K562 (cell line): ENCODE measurements at regions of chr7 and their contacts with region 1.

Region 1: GRCh38 chr7:131040467-131040932 is 287.2 kb upstream of the MKLN1 start:
- DNase-seq: peak; percentile 72 to 81 (median 77)
- ATAC-seq: peak; percentile 95
- H3K4me3 ChIP-seq: no peak overlapping the region
- H3K27ac ChIP-seq: no peak overlapping the region
- H3K4me1 ChIP-seq: no peaks in the 10 kb centered on the region; a peak in 2 of 5 replicates
- H3K27me3 ChIP-seq: no peaks in the 10 kb centered on the region
- CTCF ChIP-seq: peak; percentile 91 to 98 (median 96)
- EP300 ChIP-seq: no peak
- POLR2A ChIP-seq: no peak
- RAD21 ChIP-seq: peak; percentile 90 to 95

Region 2: DNA sequence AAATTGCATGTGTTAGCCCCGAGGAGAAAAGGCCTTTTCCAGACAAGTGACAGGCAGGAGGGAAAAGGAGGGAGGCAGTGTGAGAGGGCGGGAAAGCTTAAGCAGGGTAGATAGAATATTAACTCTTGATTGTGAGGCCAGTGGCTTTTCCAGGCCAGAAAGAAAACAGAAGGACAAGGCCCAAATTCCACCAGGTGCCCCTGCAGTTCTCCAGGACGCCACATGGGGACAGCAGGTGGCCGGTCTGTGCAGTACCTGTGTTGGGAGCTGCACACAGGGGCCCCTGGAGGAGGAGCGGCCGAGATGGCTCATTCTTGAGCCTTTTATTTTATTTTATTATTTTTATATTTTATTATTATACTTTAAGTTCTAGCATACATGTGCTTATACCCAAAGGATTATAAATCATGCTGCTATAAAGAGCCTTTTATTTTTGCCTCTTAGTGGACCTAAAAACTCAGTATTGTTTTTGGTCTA is 165.2 kb before region 1 on chr7:
- CTCF ChIA-PET with region 1: interaction called, 23 read pairs
- POLR2A ChIA-PET with region 1: no interaction called
- in situ Hi-C with region 1: no loop called
- intact Hi-C with region 1: loop called (anchors 1 kb)
- DNase-seq: peak; percentile 79 to 93 (median 90)
- ATAC-seq: peak; percentile 100
- H3K4me3 ChIP-seq: no peak overlapping the region
- H3K27ac ChIP-seq: no peak overlapping the region
- H3K4me1 ChIP-seq: no peaks in the 10 kb centered on the region
- H3K27me3 ChIP-seq: no peaks in the 10 kb centered on the region
- CTCF ChIP-seq: peak; percentile 97 to 99 (median 99)
- EP300 ChIP-seq: no peak
- POLR2A ChIP-seq: no peak
- RAD21 ChIP-seq: peak; percentile 72 to 93

Region 3: GRCh38 chr7:130938661-130939060 is 101.8 kb before region 1 on chr7:
- CTCF ChIA-PET with region 1: no interaction called
- POLR2A ChIA-PET with region 1: no interaction called
- in situ Hi-C with region 1: no loop called
- intact Hi-C with region 1: no loop called
- DNase-seq: no peak
- ATAC-seq: no peak
- H3K4me3 ChIP-seq: no peak overlapping the region
- H3K27ac ChIP-seq: no peak overlapping the region
- H3K4me1 ChIP-seq: peaks cover 5 to 26% of the 10 kb centered on the region in 2 experiments; a peak in 4 of 5 replicates
- H3K27me3 ChIP-seq: no peaks in the 10 kb centered on the region
- CTCF ChIP-seq: no peak
- EP300 ChIP-seq: no peak
- POLR2A ChIP-seq: no peak
- RAD21 ChIP-seq: no peak

Region 4: DNA sequence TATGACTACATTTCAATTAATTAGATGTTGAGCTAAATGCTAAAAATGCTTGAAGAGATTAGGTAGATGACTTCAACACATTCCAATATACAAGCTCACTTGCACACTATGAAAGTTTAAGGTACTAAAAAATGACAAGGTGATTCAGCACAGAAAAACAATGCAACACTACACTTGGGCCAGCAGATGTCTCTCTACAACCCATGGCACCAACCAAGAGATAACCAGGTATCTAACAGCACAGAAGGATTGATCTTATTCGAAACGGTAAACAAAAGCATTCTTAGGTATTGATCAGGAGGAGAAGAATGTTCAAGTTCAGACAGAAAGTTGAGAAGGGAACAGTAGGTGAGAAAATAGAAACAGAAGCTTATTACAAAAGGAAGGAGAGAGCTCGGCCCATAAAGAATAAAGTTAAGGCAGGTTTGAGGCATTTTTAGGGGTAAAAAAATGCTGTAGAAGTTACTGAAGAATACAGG is 58.3 kb before region 1 on chr7:
- CTCF ChIA-PET with region 1: interaction called, 7 read pairs
- POLR2A ChIA-PET with region 1: no interaction called
- in situ Hi-C with region 1: no loop called
- intact Hi-C with region 1: loop called (anchors 1 kb)
- DNase-seq: peak; percentile 46 to 68 (median 58)
- ATAC-seq: peak; percentile 96
- H3K4me3 ChIP-seq: no peak overlapping the region
- H3K27ac ChIP-seq: no peak overlapping the region
- H3K4me1 ChIP-seq: no peaks in the 10 kb centered on the region; a peak in 1 of 5 replicates
- H3K27me3 ChIP-seq: no peaks in the 10 kb centered on the region
- CTCF ChIP-seq: peak; percentile 74 to 92 (median 84)
- EP300 ChIP-seq: peak; percentile 8; the same call in 1 of the 2 replicates
- POLR2A ChIP-seq: no peak
- RAD21 ChIP-seq: peak; percentile 79 to 89